ENCODE measurements at regions of chr20 and their contacts with region 1.

Region 1: DNA sequence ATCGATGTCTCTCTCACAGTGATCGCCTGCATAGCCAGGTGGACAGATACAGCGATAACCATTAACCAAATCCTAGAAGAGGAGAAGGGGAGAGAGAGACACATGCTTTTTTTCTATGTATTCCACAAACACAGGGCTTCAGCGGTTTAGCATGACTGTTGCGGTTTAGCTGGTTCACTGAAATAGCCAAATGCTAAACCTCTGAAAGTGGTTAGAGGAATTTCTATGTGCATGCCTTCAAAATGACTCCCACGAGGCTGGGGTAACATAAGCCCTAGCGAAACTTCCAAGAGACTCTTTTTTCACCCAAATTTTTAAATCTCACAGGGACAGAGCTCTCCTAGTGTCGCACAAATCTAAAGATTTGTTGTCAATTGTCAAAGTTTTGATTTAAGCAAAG is 25.1 kb downstream of the JAG1 start:
- DNase-seq: no peak
- H3K4me3 Mint-ChIP-seq: no peak overlapping the region
- H3K27ac Mint-ChIP-seq: peak overlapping the region; percentile 19
- H3K4me1 Mint-ChIP-seq: no peaks in the 10 kb centered on the region
- H3K27me3 Mint-ChIP-seq: no peaks in the 10 kb centered on the region
- CTCF ChIP-seq: no peak

Region 2: DNA sequence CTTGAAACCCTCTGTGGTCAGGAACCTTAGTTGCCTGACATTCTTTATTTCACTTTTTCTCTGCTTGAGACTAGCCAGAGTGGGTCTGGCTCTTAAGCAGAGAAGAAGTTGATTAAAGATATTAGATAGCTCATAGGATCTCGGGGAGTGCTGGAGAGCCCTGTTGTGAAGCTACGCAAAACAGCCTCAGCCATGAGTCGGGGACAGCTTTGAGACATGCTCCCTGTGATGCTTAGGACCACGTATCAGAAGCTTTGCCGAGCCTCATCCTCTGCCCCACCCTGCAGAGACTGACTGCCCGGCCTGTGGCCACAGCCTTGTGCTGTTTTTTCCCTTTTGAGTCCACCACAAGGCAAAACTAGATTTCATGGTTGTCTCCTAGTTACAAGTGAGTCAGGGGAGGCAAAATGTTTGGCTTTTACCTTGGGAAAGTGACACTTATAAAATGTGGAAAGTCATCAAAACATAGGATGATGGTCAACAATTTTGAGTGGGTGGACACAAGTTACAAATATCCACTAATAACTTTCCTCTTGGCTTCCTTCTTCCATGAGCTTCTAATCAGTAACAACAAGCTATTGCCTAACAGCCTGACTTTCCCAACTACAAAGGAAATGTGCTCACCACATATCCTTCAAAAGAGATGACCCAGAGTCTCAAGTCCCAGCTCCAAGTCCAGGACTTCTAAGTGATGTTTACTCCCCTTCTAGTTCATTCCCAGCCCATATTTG is 83.3 kb before region 1 on chr20:
- CTCF ChIA-PET with region 1: no interaction called
- POLR2A ChIA-PET with region 1: no interaction called
- intact Hi-C with region 1: no loop called
- DNase-seq: peak; percentile 66
- H3K4me3 Mint-ChIP-seq: no peak overlapping the region
- H3K27ac Mint-ChIP-seq: peak overlapping the region; percentile 57
- H3K4me1 Mint-ChIP-seq: no peaks in the 10 kb centered on the region
- H3K27me3 Mint-ChIP-seq: no peaks in the 10 kb centered on the region
- CTCF ChIP-seq: no peak

Region 3: GRCh38 chr20:10660661-10661060 is 12.0 kb after region 1 on chr20:
- CTCF ChIA-PET with region 1: interaction called, 18 read pairs
- POLR2A ChIA-PET with region 1: interaction called, 9 read pairs
- intact Hi-C with region 1: no loop called
- DNase-seq: peak; percentile 70
- H3K4me3 Mint-ChIP-seq: peak overlapping the region; percentile 3
- H3K27ac Mint-ChIP-seq: peak overlapping the region; percentile 56
- H3K4me1 Mint-ChIP-seq: peaks cover 30% of the 10 kb centered on the region
- H3K27me3 Mint-ChIP-seq: no peaks in the 10 kb centered on the region
- CTCF ChIP-seq: no peak

Region 4: DNA sequence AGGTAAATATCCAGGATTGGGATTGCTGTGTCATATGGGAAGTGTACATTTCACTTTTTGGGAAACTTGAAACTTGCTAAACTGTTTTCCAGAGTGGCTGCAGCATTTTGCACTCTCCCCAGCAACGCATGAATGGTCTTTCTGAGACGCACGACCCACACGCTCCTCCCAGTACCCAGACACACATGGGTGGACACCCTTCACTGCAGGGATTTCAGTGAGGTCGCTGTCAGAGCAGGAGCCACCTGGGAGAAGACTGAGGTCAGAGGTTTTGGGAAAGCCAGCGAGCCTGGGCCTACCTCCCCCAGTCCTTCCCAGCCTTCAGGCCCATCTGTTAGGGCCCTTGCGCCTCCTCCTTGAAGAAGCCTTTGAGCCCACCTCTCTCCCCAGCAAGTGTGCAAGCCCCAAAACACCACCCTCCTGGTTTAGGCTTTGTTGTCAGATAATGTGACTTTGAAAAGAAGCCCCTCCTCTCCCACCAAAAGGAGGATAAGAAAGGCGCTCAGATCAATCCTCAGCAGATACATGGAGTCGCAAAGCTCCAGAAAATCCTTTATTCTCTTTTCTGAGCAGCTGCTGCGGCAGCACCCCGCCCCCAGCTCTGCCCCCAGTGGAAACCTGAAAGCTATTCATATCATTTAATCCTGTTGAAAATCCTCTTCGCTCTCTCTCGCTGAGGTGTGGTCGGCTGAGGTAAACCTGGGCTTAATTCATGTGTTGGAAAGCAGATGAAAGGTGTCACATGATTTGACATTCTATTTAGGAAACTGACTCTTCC is 37.9 kb after region 1 on chr20:
- CTCF ChIA-PET with region 1: no interaction called
- POLR2A ChIA-PET with region 1: no interaction called
- intact Hi-C with region 1: no loop called
- DNase-seq: no peak
- H3K4me3 Mint-ChIP-seq: no peak overlapping the region
- H3K27ac Mint-ChIP-seq: no peak overlapping the region
- H3K4me1 Mint-ChIP-seq: no peaks in the 10 kb centered on the region
- H3K27me3 Mint-ChIP-seq: no peaks in the 10 kb centered on the region
- CTCF ChIP-seq: no peak